CD8-positive, alpha-beta T cell (primary cell): ENCODE measurements at regions of chr4 and their contacts with region 1.

Region 1: GRCh38 chr4:181224852-181225251 is 1018.4 kb upstream of the TENM3 start:
- DNase-seq: no peak
- ATAC-seq: no peak
- H3K4me3 ChIP-seq: no peak overlapping the region
- H3K4me3 Mint-ChIP-seq: no peak overlapping the region
- H3K27ac ChIP-seq: no peak overlapping the region
- H3K27ac Mint-ChIP-seq: no peak overlapping the region
- H3K4me1 ChIP-seq: no peaks in the 10 kb centered on the region
- H3K4me1 Mint-ChIP-seq: no peaks in the 10 kb centered on the region
- H3K27me3 ChIP-seq: no peaks in the 10 kb centered on the region
- H3K27me3 Mint-ChIP-seq: no peaks in the 10 kb centered on the region
- CTCF ChIP-seq: no peak

Region 2: GRCh38 chr4:181181331-181181730 is 43.5 kb before region 1 on chr4:
- CTCF ChIA-PET with region 1: no interaction called
- POLR2A ChIA-PET with region 1: no interaction called
- intact Hi-C with region 1: loop called in 1 of 2 experiments (anchors 1 kb)
- DNase-seq: no peak
- ATAC-seq: no peak
- H3K4me3 ChIP-seq: no peak overlapping the region
- H3K4me3 Mint-ChIP-seq: no peak overlapping the region
- H3K27ac ChIP-seq: no peak overlapping the region
- H3K27ac Mint-ChIP-seq: no peak overlapping the region
- H3K4me1 ChIP-seq: no peaks in the 10 kb centered on the region
- H3K4me1 Mint-ChIP-seq: no peaks in the 10 kb centered on the region
- H3K27me3 ChIP-seq: no peaks in the 10 kb centered on the region
- H3K27me3 Mint-ChIP-seq: no peaks in the 10 kb centered on the region
- CTCF ChIP-seq: no peak